Spleen (tissue), 13 donors: ENCODE measurements at regions of chr19 and their contacts with region 1.

Region 1: GRCh38 chr19:58154679-58155648 is 4.4 kb upstream of the ZNF329 start:
- DNase-seq: peak; percentile 98
- H3K4me3 ChIP-seq: peak overlapping the region; percentile 72 to 97 (median 85)
- H3K27ac ChIP-seq: peak overlapping the region; percentile 83 to 91 (median 90)
- H3K4me1 ChIP-seq: peaks cover 17 to 46% (median 33%) of the 10 kb centered on the region in 6 donors
- H3K27me3 ChIP-seq: no peaks in the 10 kb centered on the region
- CTCF ChIP-seq: peak; percentile 95 to 100 (median 99)
- POLR2A ChIP-seq: peak in 2 of 3 donors; percentile 31 to 43

Region 2: GRCh38 chr19:57103573-57104277 is 1051.2 kb before region 1 on chr19:
- intact Hi-C with region 1: loop called (anchors 10 kb)
- DNase-seq: no peak
- H3K4me3 ChIP-seq: peak overlapping the region in 3 of 8 donors; percentile 1 to 54 (median 23)
- H3K27ac ChIP-seq: no peak overlapping the region
- H3K4me1 ChIP-seq: peaks cover 0 to 13% (median 4%) of the 10 kb centered on the region in 6 donors
- H3K27me3 ChIP-seq: peaks cover 5 to 47% (median 17%) of the 10 kb centered on the region in 7 donors
- CTCF ChIP-seq: peak; percentile 55 to 94 (median 86)
- POLR2A ChIP-seq: no peak

Region 3: GRCh38 chr19:57406516-57407123 is 748.3 kb before region 1 on chr19:
- intact Hi-C with region 1: loop called (anchors 5 kb)
- DNase-seq: peak; percentile 86
- H3K4me3 ChIP-seq: no peak overlapping the region
- H3K27ac ChIP-seq: no peak overlapping the region
- H3K4me1 ChIP-seq: peaks cover 5 to 18% (median 12%) of the 10 kb centered on the region in 6 donors
- H3K27me3 ChIP-seq: no peaks in the 10 kb centered on the region
- CTCF ChIP-seq: peak; percentile 30 to 80 (median 66)
- POLR2A ChIP-seq: no peak

Region 4: GRCh38 chr19:58021541-58022282 is 133.3 kb before region 1 on chr19:
- intact Hi-C with region 1: loop called (anchors 5 kb)
- DNase-seq: peak; percentile 35
- H3K4me3 ChIP-seq: no peak overlapping the region
- H3K27ac ChIP-seq: no peak overlapping the region
- H3K4me1 ChIP-seq: no peaks in the 10 kb centered on the region
- H3K27me3 ChIP-seq: peaks cover 0 to 16% (median 0%) of the 10 kb centered on the region in 7 donors
- CTCF ChIP-seq: peak; percentile 45 to 82 (median 71)
- POLR2A ChIP-seq: no peak